ENCODE measurements at regions of chr12 and their contacts with region 1.

Region 1: DNA sequence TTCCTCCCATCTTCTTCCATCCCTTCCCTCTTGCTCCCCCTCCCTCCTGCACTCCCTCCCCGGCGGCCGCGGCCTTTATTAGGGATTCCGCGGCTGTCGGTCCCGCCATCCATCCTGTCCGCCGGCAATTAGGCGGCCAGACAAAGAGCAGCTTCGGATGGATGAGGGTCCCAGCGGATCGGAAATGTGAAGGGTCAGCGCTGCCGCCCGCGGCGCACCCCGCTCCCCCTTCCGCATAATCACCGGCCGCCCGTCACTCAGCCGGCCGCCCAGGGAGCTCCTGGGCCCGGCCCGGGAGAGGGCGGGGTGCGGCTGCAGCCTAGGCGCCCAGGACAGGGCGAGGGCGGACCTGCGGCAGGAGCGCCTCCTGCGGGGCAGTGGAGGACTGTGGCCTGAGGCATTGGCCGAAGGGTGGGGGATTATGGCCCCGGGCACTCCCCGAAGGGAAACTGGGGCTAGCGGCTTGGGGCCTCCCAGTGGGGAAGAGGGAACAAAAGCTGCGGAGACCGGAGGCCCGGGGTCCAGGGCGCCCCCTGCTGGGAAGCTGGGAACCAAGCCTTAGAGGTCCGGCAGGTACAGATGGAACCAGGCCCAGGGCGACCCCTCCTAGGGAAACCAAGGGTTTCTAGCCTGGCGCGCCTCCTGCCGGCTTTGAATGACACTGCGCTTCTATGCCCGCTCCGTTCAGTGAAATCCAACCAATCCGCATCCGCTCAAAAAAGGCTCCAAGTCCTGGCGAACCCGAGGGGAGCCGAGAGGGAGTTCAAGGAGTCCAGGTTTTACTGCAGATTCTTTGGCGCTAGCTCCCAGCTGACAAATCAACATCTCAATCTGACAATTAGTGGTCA is 4.4 kb upstream of the DNAJC22 start:
- DNase-seq: peak; percentile 87
- CTCF ChIP-seq: peak; percentile 81

Region 2: GRCh38 chr12:49304161-49304560 is 38.1 kb before region 1 on chr12:
- CTCF ChIA-PET with region 1: interaction called, 174 read pairs
- POLR2A ChIA-PET with region 1: no interaction called
- DNase-seq: no peak
- CTCF ChIP-seq: no peak

Region 3: DNA sequence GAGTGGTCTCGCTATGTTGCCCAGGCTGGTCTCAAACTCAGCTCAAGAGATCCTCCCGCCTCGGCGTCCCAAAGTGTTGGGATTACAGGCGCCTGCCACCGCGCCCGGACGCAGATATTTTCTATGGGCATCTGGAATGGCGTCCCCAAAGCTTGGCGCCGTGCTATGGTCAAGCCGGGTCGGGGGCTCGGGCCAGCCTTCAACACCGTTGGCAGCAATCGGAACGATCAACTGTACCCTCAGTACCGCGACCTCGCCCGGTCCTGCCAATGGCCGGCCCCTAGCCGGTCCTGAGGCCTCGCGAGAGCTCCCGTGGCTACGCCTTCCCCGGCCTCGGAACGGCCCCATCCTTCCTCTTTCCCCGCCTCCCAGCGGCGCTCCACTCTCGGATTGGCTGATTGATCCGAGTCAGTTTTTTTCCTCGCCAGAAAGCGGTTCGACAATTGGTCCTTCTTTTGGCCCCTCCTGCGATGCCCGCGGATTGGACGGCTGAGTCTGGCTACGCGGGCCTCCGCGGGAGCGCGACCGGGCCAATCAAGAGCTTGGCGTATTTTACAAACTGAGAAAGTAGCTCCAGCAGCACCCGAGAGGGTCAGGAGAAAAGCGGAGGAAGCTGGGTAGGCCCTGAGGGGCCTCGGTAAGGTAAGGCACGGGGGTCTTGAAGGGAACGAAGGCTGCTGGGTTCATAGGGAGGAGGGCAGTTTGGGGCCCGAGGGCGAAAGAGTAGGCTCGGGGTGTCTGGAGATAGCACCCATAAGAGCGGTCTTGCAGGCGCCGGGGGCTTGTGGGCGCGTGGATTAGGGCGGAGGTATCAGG is 19.4 kb before region 1 on chr12 and contains the start of gene TROAP:
- CTCF ChIA-PET with region 1: interaction called, 42 read pairs
- POLR2A ChIA-PET with region 1: interaction called, 5 read pairs
- DNase-seq: peak; percentile 99
- CTCF ChIP-seq: no peak

Region 4: GRCh38 chr12:49331380-49332222 is 10.7 kb before region 1 on chr12:
- CTCF ChIA-PET with region 1: interaction called, 109 read pairs
- POLR2A ChIA-PET with region 1: interaction called, 3 read pairs
- DNase-seq: peak; percentile 16
- CTCF ChIP-seq: peak; percentile 70

Region 5: GRCh38 chr12:49366652-49367380 is 24.5 kb after region 1 on chr12:
- CTCF ChIA-PET with region 1: interaction called, 22 read pairs
- POLR2A ChIA-PET with region 1: interaction called, 5 read pairs
- DNase-seq: peak; percentile 95
- CTCF ChIP-seq: no peak

Measured in GM10248 (cell line).